ENCODE measurements at regions of chr2 and their contacts with region 1.

Region 1: DNA sequence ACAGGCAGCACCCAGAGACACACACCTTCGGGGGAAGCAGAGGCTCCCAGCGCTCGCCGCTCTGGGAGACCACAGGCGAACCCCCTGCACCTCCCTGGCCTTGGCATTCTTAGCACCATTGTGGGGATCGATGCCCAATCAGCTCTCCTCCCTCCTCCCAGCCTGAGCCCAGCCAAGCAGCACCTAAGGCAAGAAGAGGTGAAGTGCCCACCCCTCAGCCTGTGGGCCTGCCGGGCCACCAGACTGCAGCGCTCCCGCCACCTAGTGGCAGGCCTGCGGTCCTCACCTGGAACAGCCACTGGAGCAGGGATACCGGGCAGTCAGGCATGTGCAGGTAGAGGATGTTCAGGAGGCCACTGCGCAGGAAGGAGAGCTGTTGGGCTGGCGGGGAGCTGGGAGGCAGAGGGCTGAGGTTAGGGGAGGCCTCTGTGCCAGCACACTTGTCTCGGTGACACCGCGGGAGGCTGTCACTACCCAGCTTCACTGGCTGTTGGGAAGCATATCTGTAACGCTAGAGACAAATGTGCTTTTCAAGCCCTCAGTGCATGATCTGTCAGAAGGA is 35.2 kb downstream of the FAM178B start:
- DNase-seq: peak; percentile 55 to 89 (median 78)
- ATAC-seq: peak; percentile 98
- H3K4me3 ChIP-seq: no peak overlapping the region
- H3K4me3 Mint-ChIP-seq: no peak overlapping the region
- H3K27ac ChIP-seq: no peak overlapping the region
- H3K27ac Mint-ChIP-seq: no peak overlapping the region
- H3K4me1 ChIP-seq: peaks cover 23% of the 10 kb centered on the region
- H3K4me1 Mint-ChIP-seq: peaks cover 21% of the 10 kb centered on the region
- H3K27me3 ChIP-seq: no peaks in the 10 kb centered on the region
- H3K27me3 Mint-ChIP-seq: no peaks in the 10 kb centered on the region
- CTCF ChIP-seq: peak; percentile 90

Region 2: GRCh38 chr2:96665083-96665569 is 286.0 kb before region 1 on chr2:
- CTCF ChIA-PET with region 1: no interaction called
- POLR2A ChIA-PET with region 1: no interaction called
- intact Hi-C with region 1: no loop called
- DNase-seq: peak in 1 of 9 experiments; percentile 25
- ATAC-seq: no peak
- H3K4me3 ChIP-seq: no peak overlapping the region
- H3K4me3 Mint-ChIP-seq: no peak overlapping the region
- H3K27ac ChIP-seq: no peak overlapping the region
- H3K27ac Mint-ChIP-seq: no peak overlapping the region
- H3K4me1 ChIP-seq: no peaks in the 10 kb centered on the region
- H3K4me1 Mint-ChIP-seq: no peaks in the 10 kb centered on the region
- H3K27me3 ChIP-seq: no peaks in the 10 kb centered on the region
- H3K27me3 Mint-ChIP-seq: no peaks in the 10 kb centered on the region
- CTCF ChIP-seq: no peak

Region 3: DNA sequence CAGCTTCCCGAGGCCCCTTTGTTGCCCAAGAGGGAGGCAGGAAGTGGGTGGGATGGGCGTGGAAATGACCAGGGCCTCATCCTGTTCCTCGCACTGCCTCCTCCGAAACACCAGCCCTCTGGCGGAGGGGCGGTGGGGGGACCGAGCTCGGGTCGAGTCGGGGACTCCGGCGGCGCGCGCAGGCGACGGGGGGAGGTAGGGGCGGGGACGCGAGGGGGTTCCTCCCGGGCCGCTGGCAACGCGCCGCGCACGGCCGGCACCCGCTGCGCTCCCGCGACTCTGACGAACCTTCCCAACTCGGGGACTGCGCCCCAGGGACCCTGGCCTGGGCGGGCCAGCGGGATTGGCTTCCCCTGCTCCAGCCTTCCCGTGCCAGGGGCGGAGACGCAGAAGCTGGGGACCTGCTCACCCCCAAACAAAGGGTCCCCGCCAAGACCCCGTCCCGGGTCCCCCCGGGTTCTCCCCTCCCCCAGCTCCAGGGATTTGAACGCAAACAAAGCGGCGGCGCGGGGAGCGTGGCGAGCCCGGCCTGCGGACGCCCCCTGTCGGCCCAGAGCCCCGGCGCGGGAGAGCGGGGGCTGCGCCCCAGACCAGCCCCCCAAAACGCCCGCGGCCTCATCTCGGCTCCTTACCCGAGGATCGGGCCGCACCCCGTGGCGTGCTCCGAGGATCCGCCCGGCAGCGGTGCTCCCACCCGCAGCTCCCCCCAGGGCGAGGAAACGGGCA is 82.5 kb before region 1 on chr2:
- CTCF ChIA-PET with region 1: interaction called, 651 read pairs
- POLR2A ChIA-PET with region 1: interaction called, 6 read pairs
- intact Hi-C with region 1: loop called in 1 of 2 experiments (anchors 2 kb)
- DNase-seq: peak in 8 of 9 experiments; percentile 43 to 80 (median 66)
- ATAC-seq: peak; percentile 39
- H3K4me3 ChIP-seq: peak overlapping the region; percentile 77 to 83
- H3K4me3 Mint-ChIP-seq: peak overlapping the region; percentile 86
- H3K27ac ChIP-seq: peak overlapping the region; percentile 53 to 60
- H3K27ac Mint-ChIP-seq: peak overlapping the region; percentile 84
- H3K4me1 ChIP-seq: peaks cover 38% of the 10 kb centered on the region
- H3K4me1 Mint-ChIP-seq: peaks cover 45% of the 10 kb centered on the region
- H3K27me3 ChIP-seq: no peaks in the 10 kb centered on the region
- H3K27me3 Mint-ChIP-seq: no peaks in the 10 kb centered on the region
- CTCF ChIP-seq: peak; percentile 50

Region 4: GRCh38 chr2:96881349-96882195 is 69.6 kb before region 1 on chr2:
- CTCF ChIA-PET with region 1: interaction called, 11 read pairs
- POLR2A ChIA-PET with region 1: no interaction called
- intact Hi-C with region 1: no loop called
- DNase-seq: no peak
- ATAC-seq: no peak
- H3K4me3 ChIP-seq: no peak overlapping the region
- H3K4me3 Mint-ChIP-seq: no peak overlapping the region
- H3K27ac ChIP-seq: no peak overlapping the region
- H3K27ac Mint-ChIP-seq: no peak overlapping the region
- H3K4me1 ChIP-seq: no peaks in the 10 kb centered on the region
- H3K4me1 Mint-ChIP-seq: no peaks in the 10 kb centered on the region
- H3K27me3 ChIP-seq: no peaks in the 10 kb centered on the region
- H3K27me3 Mint-ChIP-seq: no peaks in the 10 kb centered on the region
- CTCF ChIP-seq: no peak

Region 5: GRCh38 chr2:96891491-96892333 is 59.5 kb before region 1 on chr2:
- CTCF ChIA-PET with region 1: interaction called, 11 read pairs
- POLR2A ChIA-PET with region 1: no interaction called
- intact Hi-C with region 1: no loop called
- DNase-seq: peak in 8 of 9 experiments; percentile 11 to 73 (median 46)
- ATAC-seq: peak; percentile 71
- H3K4me3 ChIP-seq: no peak overlapping the region
- H3K4me3 Mint-ChIP-seq: peak overlapping the region; percentile 44
- H3K27ac ChIP-seq: no peak overlapping the region
- H3K27ac Mint-ChIP-seq: peak overlapping the region; percentile 77
- H3K4me1 ChIP-seq: peaks cover 40% of the 10 kb centered on the region
- H3K4me1 Mint-ChIP-seq: peaks cover 51% of the 10 kb centered on the region
- H3K27me3 ChIP-seq: no peaks in the 10 kb centered on the region
- H3K27me3 Mint-ChIP-seq: no peaks in the 10 kb centered on the region
- CTCF ChIP-seq: no peak

Region 6: DNA sequence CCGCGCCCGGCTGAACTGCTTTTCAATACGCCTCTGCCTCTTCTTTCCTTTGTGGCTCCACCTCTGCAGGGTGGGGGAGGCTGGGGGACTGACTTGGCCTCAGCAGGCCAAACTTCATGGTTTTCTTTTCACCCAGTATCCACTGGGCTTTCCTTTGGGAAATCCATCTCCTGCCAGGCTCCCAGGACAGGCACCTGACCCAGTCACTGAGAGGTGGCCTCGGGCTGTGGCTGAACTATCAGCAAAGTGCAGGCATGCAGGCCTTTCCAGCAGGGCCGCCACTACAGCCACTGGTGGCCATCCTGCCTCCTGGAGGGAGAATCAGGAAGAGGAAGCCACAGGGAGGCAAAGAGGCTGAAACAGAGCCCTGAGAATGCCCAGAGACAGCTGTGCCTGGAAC is 47.8 kb before region 1 on chr2:
- CTCF ChIA-PET with region 1: interaction called, 10 read pairs
- POLR2A ChIA-PET with region 1: no interaction called
- intact Hi-C with region 1: no loop called
- DNase-seq: no peak
- ATAC-seq: no peak
- H3K4me3 ChIP-seq: no peak overlapping the region
- H3K4me3 Mint-ChIP-seq: no peak overlapping the region
- H3K27ac ChIP-seq: no peak overlapping the region
- H3K27ac Mint-ChIP-seq: no peak overlapping the region
- H3K4me1 ChIP-seq: no peaks in the 10 kb centered on the region
- H3K4me1 Mint-ChIP-seq: peaks cover 17% of the 10 kb centered on the region
- H3K27me3 ChIP-seq: no peaks in the 10 kb centered on the region
- H3K27me3 Mint-ChIP-seq: no peaks in the 10 kb centered on the region
- CTCF ChIP-seq: no peak

Region 7: DNA sequence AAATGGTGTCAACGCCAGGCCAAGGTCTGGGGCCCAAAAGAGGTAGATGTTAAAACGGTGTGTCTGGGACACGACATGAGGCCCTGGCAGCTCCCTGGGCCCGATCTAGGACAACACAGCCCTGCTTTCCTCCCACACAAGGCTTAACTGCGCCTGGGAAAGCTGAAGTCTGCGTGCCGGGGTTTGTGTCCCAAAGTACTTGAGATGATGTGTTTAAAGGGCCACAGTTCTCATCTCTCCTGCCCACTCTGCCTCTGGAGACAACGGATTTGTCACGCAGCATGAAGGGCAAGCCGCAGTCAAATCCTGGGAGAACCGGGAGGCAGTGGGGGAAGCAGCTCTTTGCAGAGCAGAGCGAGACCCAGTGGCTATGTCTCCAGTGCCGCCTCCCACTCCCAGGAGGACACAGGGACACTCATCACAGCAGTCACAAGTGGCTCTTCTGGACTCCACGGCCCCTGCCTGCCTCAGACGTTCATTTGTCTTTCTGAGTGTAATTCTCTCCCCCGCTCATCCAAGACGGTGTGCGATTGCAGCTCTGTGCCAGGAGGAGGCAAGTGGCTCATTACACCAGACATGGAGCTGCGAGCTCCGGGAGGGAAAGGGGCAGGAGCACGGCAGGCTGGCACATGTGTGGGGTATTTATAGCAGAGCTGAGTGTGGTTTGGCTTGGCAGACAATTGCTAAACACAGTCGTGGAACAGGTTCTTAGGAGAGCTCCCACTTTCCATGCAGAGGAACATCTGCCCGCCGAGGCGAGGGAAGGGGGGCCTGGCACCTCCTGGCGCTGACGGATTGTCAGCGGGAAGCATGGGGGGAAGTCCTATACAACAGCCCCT is 23.6 kb before region 1 on chr2:
- CTCF ChIA-PET with region 1: interaction called, 48 read pairs
- POLR2A ChIA-PET with region 1: interaction called, 7 read pairs
- intact Hi-C with region 1: loop called in 1 of 2 experiments (anchors 2 kb)
- DNase-seq: no peak
- ATAC-seq: no peak
- H3K4me3 ChIP-seq: no peak overlapping the region
- H3K4me3 Mint-ChIP-seq: no peak overlapping the region
- H3K27ac ChIP-seq: no peak overlapping the region
- H3K27ac Mint-ChIP-seq: no peak overlapping the region
- H3K4me1 ChIP-seq: peaks cover 23% of the 10 kb centered on the region
- H3K4me1 Mint-ChIP-seq: peaks cover 27% of the 10 kb centered on the region
- H3K27me3 ChIP-seq: no peaks in the 10 kb centered on the region
- H3K27me3 Mint-ChIP-seq: no peaks in the 10 kb centered on the region
- CTCF ChIP-seq: no peak

Region 8: DNA sequence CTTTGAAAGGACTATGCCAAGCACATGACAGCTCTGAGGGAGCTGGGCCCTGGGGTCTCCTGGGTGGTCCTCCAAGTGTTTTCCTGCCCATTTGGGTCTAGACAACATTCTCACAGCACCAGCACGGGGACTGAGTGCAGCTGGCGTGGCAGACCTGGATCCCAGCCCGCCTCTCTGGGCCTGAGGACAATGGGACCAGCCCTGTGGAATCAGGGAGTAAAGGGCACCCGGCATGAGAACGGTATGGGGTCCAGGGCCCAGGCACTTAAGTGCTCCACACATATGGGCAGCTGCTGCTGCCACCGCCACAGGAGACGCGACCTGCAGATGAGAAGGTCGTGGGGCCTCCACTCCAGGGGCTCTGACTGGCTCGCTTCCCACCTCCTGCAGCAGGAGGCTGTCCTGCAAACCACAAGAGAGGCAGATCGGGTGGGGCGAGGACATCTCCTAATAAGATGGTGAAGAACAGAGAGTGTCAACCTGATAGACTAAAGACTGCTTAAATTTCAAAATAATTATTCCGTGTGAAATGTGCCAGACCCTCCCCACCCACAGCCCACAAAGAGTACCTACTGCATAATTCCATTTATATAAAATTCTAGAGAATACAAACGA is 11.1 kb before region 1 on chr2:
- CTCF ChIA-PET with region 1: interaction called, 49 read pairs
- POLR2A ChIA-PET with region 1: no interaction called
- intact Hi-C with region 1: no loop called
- DNase-seq: no peak
- ATAC-seq: no peak
- H3K4me3 ChIP-seq: peak overlapping the region in 1 of 2 experiments; percentile 21
- H3K4me3 Mint-ChIP-seq: no peak overlapping the region
- H3K27ac ChIP-seq: no peak overlapping the region
- H3K27ac Mint-ChIP-seq: no peak overlapping the region
- H3K4me1 ChIP-seq: peaks cover 27% of the 10 kb centered on the region
- H3K4me1 Mint-ChIP-seq: peaks cover 35% of the 10 kb centered on the region
- H3K27me3 ChIP-seq: no peaks in the 10 kb centered on the region
- H3K27me3 Mint-ChIP-seq: no peaks in the 10 kb centered on the region
- CTCF ChIP-seq: no peak

Measured in CD8-positive, alpha-beta T cell (primary cell).